ENCODE measurements at regions of chr3 and their contacts with region 1.

Region 1: DNA sequence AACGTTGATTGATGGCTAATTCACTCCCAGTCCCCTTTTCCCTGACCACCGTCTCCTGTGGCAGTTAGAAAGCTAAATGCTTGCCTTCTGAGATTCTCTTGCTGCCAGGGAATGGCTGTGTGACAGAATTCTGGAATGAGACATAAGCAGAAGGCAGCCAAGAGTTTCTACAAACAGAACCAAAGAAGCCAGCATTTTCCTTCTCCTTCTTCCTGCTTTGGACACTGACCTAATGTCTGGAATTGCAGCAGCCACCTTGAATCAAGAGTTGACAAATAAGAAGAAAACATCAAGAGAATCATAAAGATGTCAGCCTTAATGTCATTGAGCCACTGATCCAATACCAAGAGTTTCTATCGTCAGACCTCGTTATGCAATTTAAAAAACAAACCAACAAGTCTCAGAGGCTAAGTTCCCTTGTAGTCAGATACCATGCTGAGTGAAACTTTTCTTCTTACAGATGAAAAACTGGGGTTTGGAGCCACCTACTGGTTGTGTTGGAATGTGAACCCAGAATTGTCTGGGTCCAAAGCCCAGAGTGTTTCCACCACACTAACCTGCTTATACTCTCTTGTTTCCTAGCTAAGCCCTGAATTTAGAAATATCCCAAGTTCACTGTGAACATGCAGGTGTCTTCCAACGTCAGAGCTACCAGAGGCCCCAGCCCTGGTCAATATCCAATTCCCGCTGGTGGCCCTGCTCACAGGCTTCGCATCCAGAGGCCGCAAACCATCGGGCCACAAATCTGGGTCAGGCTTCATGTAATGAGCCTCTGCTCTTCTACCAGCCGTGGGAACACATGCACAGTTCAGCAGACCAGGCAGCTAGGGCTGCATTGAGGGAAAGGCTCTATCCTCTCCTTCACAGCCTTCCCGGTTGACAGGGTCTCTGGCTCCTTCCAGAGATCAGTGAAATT is 42.5 kb downstream of the MCF2L2 start:
- DNase-seq: peak; percentile 61
- H3K4me3 Mint-ChIP-seq: no peak overlapping the region
- H3K27ac Mint-ChIP-seq: no peak overlapping the region
- H3K4me1 Mint-ChIP-seq: peaks cover 6% of the 10 kb centered on the region
- H3K27me3 Mint-ChIP-seq: no peaks in the 10 kb centered on the region

Region 2: GRCh38 chr3:182713743-182714517 is 672.0 kb before region 1 on chr3:
- CTCF ChIA-PET with region 1: interaction called, 4 read pairs
- POLR2A ChIA-PET with region 1: no interaction called
- intact Hi-C with region 1: loop called (anchors 5 kb)
- DNase-seq: no peak
- H3K4me3 Mint-ChIP-seq: no peak overlapping the region
- H3K27ac Mint-ChIP-seq: no peak overlapping the region
- H3K4me1 Mint-ChIP-seq: peaks cover 5% of the 10 kb centered on the region
- H3K27me3 Mint-ChIP-seq: no peaks in the 10 kb centered on the region

Region 3: GRCh38 chr3:183122257-183122932 is 263.6 kb before region 1 on chr3:
- CTCF ChIA-PET with region 1: interaction called, 185 read pairs
- POLR2A ChIA-PET with region 1: no interaction called
- intact Hi-C with region 1: loop called (anchors 1 kb)
- DNase-seq: no peak
- H3K4me3 Mint-ChIP-seq: no peak overlapping the region
- H3K27ac Mint-ChIP-seq: no peak overlapping the region
- H3K4me1 Mint-ChIP-seq: peaks cover 6% of the 10 kb centered on the region
- H3K27me3 Mint-ChIP-seq: peaks cover 3% of the 10 kb centered on the region

Region 4: GRCh38 chr3:183178629-183179549 is 207.1 kb before region 1 on chr3:
- CTCF ChIA-PET with region 1: interaction called, 275 read pairs
- POLR2A ChIA-PET with region 1: interaction called, 3 read pairs
- intact Hi-C with region 1: loop called (anchors 1 kb)
- DNase-seq: peak; percentile 77
- H3K4me3 Mint-ChIP-seq: peak overlapping the region; percentile 74
- H3K27ac Mint-ChIP-seq: no peak overlapping the region
- H3K4me1 Mint-ChIP-seq: peaks cover 3% of the 10 kb centered on the region
- H3K27me3 Mint-ChIP-seq: peaks cover 22% of the 10 kb centered on the region

Region 5: GRCh38 chr3:183252973-183253901 is 132.7 kb before region 1 on chr3 and contains the start of gene B3GNT5:
- CTCF ChIA-PET with region 1: interaction called, 25 read pairs
- POLR2A ChIA-PET with region 1: no interaction called
- intact Hi-C with region 1: loop called (anchors 1 kb)
- DNase-seq: peak; percentile 60
- H3K4me3 Mint-ChIP-seq: peak within 1 kb of the TSS; percentile 76
- H3K27ac Mint-ChIP-seq: peak within 1 kb of the TSS; percentile 34
- H3K4me1 Mint-ChIP-seq: peaks cover 12% of the 10 kb centered on the region
- H3K27me3 Mint-ChIP-seq: peaks cover 18% of the 10 kb centered on the region
- total RNA-seq, gene B3GNT5: 12.7 to 12.9 TPM

Region 6: GRCh38 chr3:183369117-183369516 is 16.8 kb before region 1 on chr3:
- CTCF ChIA-PET with region 1: interaction called, 26 read pairs
- POLR2A ChIA-PET with region 1: no interaction called
- intact Hi-C with region 1: loop called (anchors 1 kb)
- DNase-seq: no peak
- H3K4me3 Mint-ChIP-seq: no peak overlapping the region
- H3K27ac Mint-ChIP-seq: no peak overlapping the region
- H3K4me1 Mint-ChIP-seq: peaks cover 31% of the 10 kb centered on the region
- H3K27me3 Mint-ChIP-seq: no peaks in the 10 kb centered on the region

Region 7: GRCh38 chr3:183664913-183665381 is 279.0 kb after region 1 on chr3:
- CTCF ChIA-PET with region 1: no interaction called
- POLR2A ChIA-PET with region 1: no interaction called
- intact Hi-C with region 1: no loop called
- DNase-seq: no peak
- H3K4me3 Mint-ChIP-seq: no peak overlapping the region
- H3K27ac Mint-ChIP-seq: no peak overlapping the region
- H3K4me1 Mint-ChIP-seq: peaks cover 10% of the 10 kb centered on the region
- H3K27me3 Mint-ChIP-seq: no peaks in the 10 kb centered on the region

Measured in activated CD4-positive, alpha-beta memory T cell treated with anti-CD3 and anti-CD28 coated beads for 36 hours (primary cell).